ENCODE measurements at regions of chr7 and their contacts with region 1.

Region 1: DNA sequence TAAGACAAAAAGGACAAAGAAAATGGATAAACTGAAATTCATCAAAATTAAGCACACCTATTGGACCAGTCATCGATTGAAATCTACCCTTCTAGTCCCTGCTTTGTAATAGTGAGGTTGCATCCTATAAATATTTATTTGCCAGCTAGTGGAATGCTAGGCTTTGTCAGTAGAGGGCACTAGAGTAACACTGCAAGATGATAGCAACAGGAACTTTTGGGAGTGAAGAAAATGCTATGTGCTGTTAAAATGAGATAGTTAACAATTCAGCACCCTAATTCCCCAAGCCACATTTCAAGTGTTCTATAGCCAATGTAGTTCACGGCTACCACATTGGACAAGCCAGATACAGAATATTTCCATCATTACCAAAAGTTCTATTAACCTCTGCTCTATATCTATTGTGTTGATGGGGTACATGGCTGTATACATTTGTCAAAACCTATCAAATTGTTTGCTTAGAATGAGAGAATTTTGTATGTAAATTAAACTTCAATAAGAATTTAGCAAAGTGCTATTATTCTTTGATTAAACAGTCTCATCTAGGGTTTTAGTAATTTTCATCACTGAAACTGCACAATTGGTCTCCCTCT is 69.8 kb downstream of the LSMEM1 start:
- DNase-seq: peak; percentile 45
- H3K4me3 Mint-ChIP-seq: no peak overlapping the region
- H3K27ac Mint-ChIP-seq: no peak overlapping the region
- H3K4me1 Mint-ChIP-seq: no peaks in the 10 kb centered on the region
- H3K27me3 Mint-ChIP-seq: no peaks in the 10 kb centered on the region
- CTCF ChIP-seq: peak; percentile 62

Region 2: GRCh38 chr7:112869111-112869757 is 318.7 kb after region 1 on chr7:
- CTCF ChIA-PET with region 1: no interaction called
- intact Hi-C with region 1: loop called (anchors 1 kb)
- DNase-seq: peak; percentile 58
- H3K4me3 Mint-ChIP-seq: no peak overlapping the region
- H3K27ac Mint-ChIP-seq: no peak overlapping the region
- H3K4me1 Mint-ChIP-seq: no peaks in the 10 kb centered on the region
- H3K27me3 Mint-ChIP-seq: no peaks in the 10 kb centered on the region
- CTCF ChIP-seq: peak; percentile 86

Region 3: GRCh38 chr7:112898432-112899290 is 348.1 kb after region 1 on chr7:
- CTCF ChIA-PET with region 1: no interaction called
- intact Hi-C with region 1: loop called (anchors 1 kb)
- DNase-seq: peak; percentile 66
- H3K4me3 Mint-ChIP-seq: no peak overlapping the region
- H3K27ac Mint-ChIP-seq: no peak overlapping the region
- H3K4me1 Mint-ChIP-seq: no peaks in the 10 kb centered on the region
- H3K27me3 Mint-ChIP-seq: no peaks in the 10 kb centered on the region
- CTCF ChIP-seq: peak; percentile 70

Region 4: DNA sequence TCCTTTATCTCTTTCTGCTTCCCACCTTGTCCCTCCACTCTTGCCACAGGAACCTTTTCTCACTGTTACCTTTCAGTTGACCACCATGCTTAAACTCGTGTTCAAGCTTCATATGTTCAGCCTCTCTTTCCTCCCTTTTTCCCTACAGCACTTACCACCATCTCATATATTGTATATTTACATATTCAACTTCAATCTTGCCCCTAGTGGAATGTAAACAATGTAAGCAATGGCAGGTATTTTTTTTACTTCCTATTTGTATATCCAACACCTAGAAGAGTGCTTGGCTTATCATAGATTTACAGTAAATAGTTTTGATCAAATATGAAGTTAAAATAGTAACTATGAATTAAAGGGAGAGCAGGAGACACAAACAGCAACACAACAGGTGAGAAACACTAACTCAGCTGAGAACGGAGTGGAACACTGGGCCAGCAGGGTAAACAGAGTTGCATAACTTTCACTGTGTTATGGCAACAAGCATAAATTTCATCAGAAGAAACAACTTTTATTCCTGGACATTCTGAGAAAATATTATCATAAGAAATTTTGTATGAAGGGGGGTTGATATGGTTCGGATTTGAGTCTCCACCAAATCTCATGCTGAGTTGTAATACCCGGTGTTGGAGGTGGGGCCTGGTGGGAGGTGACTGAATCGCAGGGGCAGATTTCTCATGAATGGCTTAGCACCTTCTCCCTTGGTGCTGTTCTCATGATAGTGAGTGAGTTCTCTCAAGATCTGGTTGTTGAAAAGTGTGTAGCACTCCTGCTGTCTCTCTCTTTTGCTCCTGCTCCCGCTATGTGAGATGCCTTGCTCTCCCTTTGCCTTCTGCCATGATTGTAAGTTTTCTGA is 620.0 kb after region 1 on chr7:
- CTCF ChIA-PET with region 1: no interaction called
- intact Hi-C with region 1: no loop called
- DNase-seq: no peak
- H3K4me3 Mint-ChIP-seq: no peak overlapping the region
- H3K27ac Mint-ChIP-seq: no peak overlapping the region
- H3K4me1 Mint-ChIP-seq: no peaks in the 10 kb centered on the region
- H3K27me3 Mint-ChIP-seq: no peaks in the 10 kb centered on the region
- CTCF ChIP-seq: no peak

Region 5: GRCh38 chr7:113421696-113422330 is 871.2 kb after region 1 on chr7:
- CTCF ChIA-PET with region 1: interaction called, 3 read pairs
- intact Hi-C with region 1: loop called (anchors 1 kb)
- DNase-seq: peak; percentile 79
- H3K4me3 Mint-ChIP-seq: no peak overlapping the region
- H3K27ac Mint-ChIP-seq: no peak overlapping the region
- H3K4me1 Mint-ChIP-seq: peaks cover 7% of the 10 kb centered on the region
- H3K27me3 Mint-ChIP-seq: no peaks in the 10 kb centered on the region
- CTCF ChIP-seq: peak; percentile 78

Region 6: DNA sequence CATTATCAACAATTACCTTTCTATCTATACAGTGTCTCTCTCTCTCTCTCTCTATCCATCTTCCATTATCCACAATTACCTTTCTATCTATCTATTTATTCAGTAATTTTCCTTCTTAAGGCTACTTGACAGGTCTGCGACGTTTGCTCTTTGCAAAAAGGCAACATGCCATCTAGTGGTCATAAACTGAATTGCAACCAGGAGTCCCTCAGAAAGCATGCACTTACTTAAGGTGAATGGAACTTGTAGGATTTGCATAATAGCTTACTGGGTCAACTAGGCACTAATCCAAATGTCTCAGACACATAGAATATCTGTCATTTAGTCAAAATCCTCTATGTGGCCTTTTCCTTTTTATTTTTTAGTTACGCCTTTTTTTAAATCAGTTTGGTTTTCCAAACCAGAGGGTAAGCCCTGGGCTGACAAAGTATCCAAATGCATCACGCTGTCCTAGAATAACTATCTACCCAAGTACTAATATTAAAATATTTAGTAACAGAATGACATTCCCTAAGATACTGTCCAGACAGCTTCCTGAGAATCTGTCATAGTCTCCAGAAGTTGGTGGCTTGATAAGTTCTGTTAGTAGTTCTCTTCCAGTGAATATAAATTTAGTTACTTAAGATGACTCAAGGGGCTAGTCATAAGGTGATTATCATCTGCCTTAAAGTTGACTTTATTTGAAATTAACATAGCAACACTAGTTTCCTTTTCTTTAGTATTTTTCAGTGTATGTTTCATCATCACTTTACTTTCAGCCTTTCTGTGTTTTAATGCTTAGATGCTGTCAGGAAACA is 1159.9 kb after region 1 on chr7:
- CTCF ChIA-PET with region 1: no interaction called
- intact Hi-C with region 1: loop called (anchors 5 kb)
- DNase-seq: peak; percentile 68
- H3K4me3 Mint-ChIP-seq: no peak overlapping the region
- H3K27ac Mint-ChIP-seq: no peak overlapping the region
- H3K4me1 Mint-ChIP-seq: no peaks in the 10 kb centered on the region
- H3K27me3 Mint-ChIP-seq: no peaks in the 10 kb centered on the region
- CTCF ChIP-seq: peak; percentile 80